ENCODE measurements at regions of chr6 and their contacts with region 1.

Region 1: DNA sequence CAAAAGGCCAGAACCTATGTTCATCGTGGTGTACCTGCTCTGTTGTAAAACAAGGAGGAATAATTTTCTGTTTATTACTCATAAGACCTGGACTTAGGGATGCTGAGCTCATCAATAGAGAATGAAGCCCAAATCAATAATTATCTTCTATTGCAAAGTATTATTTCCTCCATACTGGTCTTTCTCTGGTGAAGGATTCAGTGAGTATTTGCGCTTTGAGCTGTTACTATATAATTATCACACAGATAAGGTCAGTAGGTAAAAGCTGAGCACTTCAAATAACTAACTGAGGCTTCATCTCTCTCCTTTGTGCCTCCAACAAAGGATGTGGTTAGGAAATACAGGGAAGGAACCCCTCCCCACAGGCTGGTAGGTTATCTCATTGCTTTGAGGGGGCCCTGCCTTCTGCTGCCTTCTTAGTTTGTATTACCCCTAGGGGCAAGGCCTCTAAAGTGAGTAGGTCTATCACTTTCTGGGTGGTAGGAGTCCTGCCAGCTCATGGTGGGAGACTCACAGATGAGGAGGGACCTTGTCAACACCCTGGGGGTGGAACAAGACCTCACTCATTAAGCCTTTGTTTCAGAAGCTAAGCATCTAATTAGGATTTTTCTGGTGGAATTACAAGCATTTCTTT is 34.5 kb downstream of the EDN1 start:
- DNase-seq: no peak
- H3K4me3 Mint-ChIP-seq: no peak overlapping the region
- H3K27ac Mint-ChIP-seq: peak overlapping the region; percentile 98
- H3K4me1 Mint-ChIP-seq: peaks cover 38% of the 10 kb centered on the region
- H3K27me3 Mint-ChIP-seq: no peaks in the 10 kb centered on the region
- CTCF ChIP-seq: no peak

Region 2: DNA sequence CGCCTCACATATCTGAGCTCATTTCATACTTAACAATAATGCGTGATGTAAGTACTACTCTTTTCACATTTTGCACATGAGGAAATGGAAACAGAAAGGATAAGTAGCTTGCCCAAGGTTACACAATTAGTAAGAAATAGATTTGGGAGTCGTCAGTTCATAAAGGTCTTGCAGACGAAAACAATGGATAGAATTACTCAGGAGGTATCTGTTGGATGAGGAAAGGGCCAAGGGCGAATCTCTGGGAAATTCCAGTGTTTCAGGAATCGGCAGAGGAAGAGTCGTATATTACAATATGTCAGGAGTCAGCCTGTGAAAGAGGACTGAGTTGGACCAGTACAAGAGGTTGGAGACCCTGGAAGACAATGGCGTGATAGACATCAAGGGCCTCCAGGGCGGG is 47.2 kb before region 1 on chr6:
- CTCF ChIA-PET with region 1: no interaction called
- POLR2A ChIA-PET with region 1: no interaction called
- intact Hi-C with region 1: no loop called
- DNase-seq: no peak
- H3K4me3 Mint-ChIP-seq: no peak overlapping the region
- H3K27ac Mint-ChIP-seq: no peak overlapping the region
- H3K4me1 Mint-ChIP-seq: peaks cover 42% of the 10 kb centered on the region
- H3K27me3 Mint-ChIP-seq: no peaks in the 10 kb centered on the region
- CTCF ChIP-seq: no peak

Region 3: GRCh38 chr6:12296255-12296573 is 28.4 kb before region 1 on chr6:
- CTCF ChIA-PET with region 1: interaction called, 28 read pairs
- POLR2A ChIA-PET with region 1: interaction called, 103 read pairs
- intact Hi-C with region 1: no loop called
- DNase-seq: peak; percentile 82
- H3K4me3 Mint-ChIP-seq: peak overlapping the region; percentile 62
- H3K27ac Mint-ChIP-seq: peak overlapping the region; percentile 95
- H3K4me1 Mint-ChIP-seq: peaks cover 56% of the 10 kb centered on the region
- H3K27me3 Mint-ChIP-seq: no peaks in the 10 kb centered on the region
- CTCF ChIP-seq: no peak

Measured in MCF 10A (cell line).